ENCODE measurements at regions of chr13 and their contacts with region 1.

Region 1: GRCh38 chr13:27251166-27252091 is at the start of gene RPL21:
- DNase-seq: peak; percentile 92 to 95 (median 93)
- H3K4me3 ChIP-seq: peak within 1 kb of the TSS; percentile 84 to 98
- H3K4me3 Mint-ChIP-seq: peak within 1 kb of the TSS; percentile 93 to 99 (median 96)
- H3K27ac ChIP-seq: peak within 1 kb of the TSS; percentile 99
- H3K27ac Mint-ChIP-seq: peak within 1 kb of the TSS; percentile 98 to 100 (median 100)
- H3K4me1 ChIP-seq: peaks cover 44% of the 10 kb centered on the region
- H3K4me1 Mint-ChIP-seq: peaks cover 34 to 74% (median 54%) of the 10 kb centered on the region in 4 donors
- H3K27me3 ChIP-seq: no peaks in the 10 kb centered on the region
- H3K27me3 Mint-ChIP-seq: no peaks in the 10 kb centered on the region
- total RNA-seq, gene RPL21: 2,008 to 2,177 TPM

Region 2: DNA sequence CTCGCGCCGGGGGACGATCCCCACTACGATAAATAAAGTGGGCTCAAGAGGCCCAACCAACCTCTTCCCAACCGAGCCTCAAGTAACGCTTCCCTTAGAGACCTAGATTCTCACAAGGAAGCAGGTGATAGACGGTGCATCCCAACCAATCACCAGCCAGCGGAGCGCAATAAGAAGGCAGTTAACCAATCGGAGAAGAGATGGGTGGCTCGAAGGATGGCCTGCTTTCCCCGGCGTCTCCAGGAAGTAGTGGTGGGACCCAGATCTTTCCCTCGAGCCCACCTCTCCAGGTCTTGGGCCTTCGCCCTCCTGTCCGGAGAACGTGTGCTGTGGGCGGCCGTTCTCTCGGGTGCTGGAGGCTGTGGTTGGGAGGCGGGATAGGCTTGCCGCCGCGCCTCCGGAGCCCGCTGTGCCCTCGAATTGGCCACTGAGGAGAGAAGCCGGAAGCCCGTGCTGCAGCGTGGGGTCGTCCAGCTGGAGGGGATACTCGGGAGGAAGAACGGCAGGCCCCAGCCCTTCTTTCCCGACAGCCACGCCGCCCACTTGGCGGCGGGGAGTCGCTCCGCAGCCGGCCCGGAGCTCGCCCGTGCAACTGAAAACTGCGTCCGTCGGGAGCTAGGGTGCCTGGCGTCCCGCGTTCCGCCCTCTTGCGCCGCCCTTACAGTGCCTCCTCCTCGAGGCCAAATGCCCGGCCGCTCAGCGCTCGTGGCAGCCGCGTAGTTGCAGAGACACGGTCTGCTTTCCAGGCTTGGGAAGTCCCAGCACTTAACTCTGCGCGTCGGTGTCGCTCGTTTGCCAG is 1029.5 kb before region 1 on chr13 and contains the start of gene RNF6:
- CTCF ChIA-PET with region 1: no interaction called
- POLR2A ChIA-PET with region 1: interaction called, 4 read pairs
- intact Hi-C with region 1: loop called (anchors 2 kb)
- DNase-seq: peak; percentile 88 to 95 (median 91)
- H3K4me3 ChIP-seq: peak within 1 kb of the TSS; percentile 86 to 98
- H3K4me3 Mint-ChIP-seq: peak within 1 kb of the TSS; percentile 95 to 100 (median 100)
- H3K27ac ChIP-seq: peak within 1 kb of the TSS; percentile 94
- H3K27ac Mint-ChIP-seq: peak within 1 kb of the TSS; percentile 92 to 99 (median 99)
- H3K4me1 ChIP-seq: peaks cover 29% of the 10 kb centered on the region
- H3K4me1 Mint-ChIP-seq: peaks cover 28 to 48% (median 41%) of the 10 kb centered on the region in 4 donors
- H3K27me3 ChIP-seq: no peaks in the 10 kb centered on the region
- H3K27me3 Mint-ChIP-seq: peaks cover 0 to 2% of the 10 kb centered on the region in 2 donors
- total RNA-seq, gene RNF6: 46.7 to 47.9 TPM

Region 3: GRCh38 chr13:27270594-27271520 is 19.4 kb after region 1 on chr13 and contains the start of gene RASL11A:
- CTCF ChIA-PET with region 1: interaction called, 9 read pairs
- POLR2A ChIA-PET with region 1: interaction called, 11 read pairs
- intact Hi-C with region 1: loop called (anchors 1 kb)
- DNase-seq: peak; percentile 62 to 76 (median 69)
- H3K4me3 ChIP-seq: peak within 1 kb of the TSS; percentile 58 to 73
- H3K4me3 Mint-ChIP-seq: peak within 1 kb of the TSS; percentile 87 to 93 (median 90)
- H3K27ac ChIP-seq: peak within 1 kb of the TSS; percentile 52
- H3K27ac Mint-ChIP-seq: peak within 1 kb of the TSS in 6 of 7 donors; percentile 25 to 84 (median 70)
- H3K4me1 ChIP-seq: peaks cover 8% of the 10 kb centered on the region
- H3K4me1 Mint-ChIP-seq: peaks cover 7 to 13% (median 11%) of the 10 kb centered on the region in 4 donors
- H3K27me3 ChIP-seq: peaks cover 6% of the 10 kb centered on the region
- H3K27me3 Mint-ChIP-seq: peaks cover 10 to 18% of the 10 kb centered on the region in 2 donors
- total RNA-seq, gene RASL11A: 0.78 to 0.96 TPM

Region 4: GRCh38 chr13:28718543-28719226 is 1467.3 kb after region 1 on chr13 and contains the start of gene SLC46A3:
- CTCF ChIA-PET with region 1: no interaction called
- POLR2A ChIA-PET with region 1: no interaction called
- intact Hi-C with region 1: loop called (anchors 2 kb)
- DNase-seq: peak; percentile 95 to 97 (median 96)
- H3K4me3 ChIP-seq: peak within 1 kb of the TSS; percentile 15 to 86
- H3K4me3 Mint-ChIP-seq: peak within 1 kb of the TSS; percentile 92 to 97 (median 94)
- H3K27ac ChIP-seq: peak within 1 kb of the TSS; percentile 65
- H3K27ac Mint-ChIP-seq: peak within 1 kb of the TSS; percentile 90 to 98 (median 95)
- H3K4me1 ChIP-seq: peaks cover 29% of the 10 kb centered on the region
- H3K4me1 Mint-ChIP-seq: peaks cover 23 to 47% (median 31%) of the 10 kb centered on the region in 4 donors
- H3K27me3 ChIP-seq: no peaks in the 10 kb centered on the region
- H3K27me3 Mint-ChIP-seq: no peaks in the 10 kb centered on the region
- total RNA-seq, gene SLC46A3: 18.7 to 18.9 TPM